Endothelial cell of umbilical vein (primary cell): ENCODE measurements at regions of chr17 and their contacts with region 1.

Region 1: DNA sequence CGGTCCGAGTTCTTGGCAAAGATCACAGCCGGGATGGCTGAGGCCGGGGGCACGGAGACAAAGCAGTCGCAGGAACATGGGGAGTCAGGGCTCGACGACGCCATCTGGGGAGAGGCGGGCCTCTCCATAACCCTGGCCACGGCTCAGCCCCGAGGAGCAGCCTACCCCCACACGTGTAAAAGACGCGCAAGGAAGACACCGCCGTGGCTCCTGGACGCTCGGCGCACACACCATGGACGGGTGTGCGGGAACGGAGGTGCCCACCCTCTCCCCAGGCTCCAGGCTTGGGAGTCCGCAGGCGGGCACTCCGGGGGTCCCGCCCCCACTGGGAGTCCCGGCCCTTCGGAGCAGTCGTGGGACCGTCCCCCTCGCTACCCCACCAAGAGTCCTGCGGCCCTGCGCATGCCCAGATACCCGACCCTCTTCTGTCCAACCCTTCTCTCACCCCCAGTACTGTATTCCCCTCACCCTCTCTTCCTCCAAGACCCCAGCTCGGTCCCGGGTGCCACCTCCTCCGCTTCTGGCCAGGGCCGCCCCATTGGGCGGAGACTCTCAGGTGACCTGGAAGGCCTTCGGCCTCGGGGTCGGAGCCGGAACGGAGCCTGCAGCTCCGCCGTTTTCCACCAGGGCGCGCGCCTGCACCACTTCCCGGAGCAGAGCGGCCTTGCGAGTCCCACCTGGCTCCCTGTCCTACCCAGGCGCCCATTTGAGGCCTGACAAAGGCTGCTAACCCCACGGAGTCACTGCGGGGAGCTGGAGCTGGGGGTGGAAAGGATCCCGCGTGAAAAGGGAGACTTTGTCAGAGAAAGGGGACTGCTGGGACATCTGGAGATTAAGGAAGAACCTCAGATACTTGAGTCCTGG is at the start of gene SCRN2:
- DNase-seq: peak; percentile 91
- H3K4me3 ChIP-seq: peak within 1 kb of the TSS; percentile 65 to 86 (median 65)
- H3K27ac ChIP-seq: no peak within 1 kb of the TSS
- H3K4me1 ChIP-seq: peaks cover 5% of the 10 kb centered on the region
- H3K27me3 ChIP-seq: no peaks in the 10 kb centered on the region
- CTCF ChIP-seq: peak; percentile 97 to 99
- POLR2A ChIP-seq: peak; percentile 32
- total RNA-seq, gene SCRN2: 31.1 and 31.7 TPM in 2 replicates

Region 2: GRCh38 chr17:47725446-47726111 is 115.4 kb before region 1 on chr17:
- CTCF ChIA-PET with region 1: no interaction called
- POLR2A ChIA-PET with region 1: no interaction called
- dilution Hi-C with region 1: no loop called
- intact Hi-C with region 1: no loop called
- DNase-seq: no peak
- H3K4me3 ChIP-seq: no peak overlapping the region
- H3K27ac ChIP-seq: no peak overlapping the region
- H3K4me1 ChIP-seq: no peaks in the 10 kb centered on the region
- H3K27me3 ChIP-seq: peaks cover 18 to 19% of the 10 kb centered on the region in 2 experiments
- CTCF ChIP-seq: no peak
- POLR2A ChIP-seq: no peak

Region 3: DNA sequence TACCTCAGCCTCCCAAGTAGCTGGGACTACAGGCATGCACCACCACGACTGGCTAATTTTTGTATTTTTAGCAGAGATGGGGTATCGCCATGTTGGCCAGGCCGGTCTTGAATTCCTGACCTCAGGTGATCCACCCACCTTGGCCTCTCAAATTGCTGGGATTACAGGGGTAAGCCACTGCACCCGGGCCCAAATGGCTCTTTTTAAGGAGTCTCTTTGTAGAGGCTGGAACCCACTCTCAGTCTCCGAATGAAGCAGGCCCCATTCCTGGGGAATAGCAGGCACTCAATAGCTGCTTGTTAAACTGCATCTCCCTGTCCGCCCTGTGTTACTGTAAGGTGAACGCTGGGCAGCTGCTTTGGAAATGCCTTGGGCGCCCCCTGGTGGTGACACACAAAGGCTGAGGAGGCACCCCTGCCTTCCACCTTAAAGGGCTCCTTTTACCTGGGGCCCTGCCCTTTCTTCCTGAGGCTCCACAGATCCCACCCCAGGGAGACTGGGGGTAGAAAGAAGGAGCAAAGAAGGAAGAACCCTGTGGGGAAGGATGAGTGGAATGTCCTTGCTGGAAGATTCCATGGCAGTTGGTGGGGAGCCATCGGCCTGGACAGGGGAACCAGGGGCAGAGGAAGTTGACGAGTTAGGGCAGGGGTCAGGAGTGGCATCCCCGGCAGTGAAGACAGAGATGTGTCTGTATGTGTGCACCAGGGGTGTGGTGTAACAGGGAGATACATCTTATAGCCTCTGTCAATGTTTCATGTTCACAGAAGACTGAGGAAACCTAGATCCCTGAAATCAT is 49.0 kb after region 1 on chr17:
- CTCF ChIA-PET with region 1: interaction called, 367 read pairs
- POLR2A ChIA-PET with region 1: interaction called, 4 read pairs
- dilution Hi-C with region 1: no loop called
- intact Hi-C with region 1: loop called (anchors 1 kb)
- DNase-seq: peak; percentile 60
- H3K4me3 ChIP-seq: no peak overlapping the region
- H3K27ac ChIP-seq: no peak overlapping the region
- H3K4me1 ChIP-seq: peaks cover 5% of the 10 kb centered on the region
- H3K27me3 ChIP-seq: no peaks in the 10 kb centered on the region
- CTCF ChIP-seq: peak; percentile 85 to 89
- POLR2A ChIP-seq: no peak

Region 4: DNA sequence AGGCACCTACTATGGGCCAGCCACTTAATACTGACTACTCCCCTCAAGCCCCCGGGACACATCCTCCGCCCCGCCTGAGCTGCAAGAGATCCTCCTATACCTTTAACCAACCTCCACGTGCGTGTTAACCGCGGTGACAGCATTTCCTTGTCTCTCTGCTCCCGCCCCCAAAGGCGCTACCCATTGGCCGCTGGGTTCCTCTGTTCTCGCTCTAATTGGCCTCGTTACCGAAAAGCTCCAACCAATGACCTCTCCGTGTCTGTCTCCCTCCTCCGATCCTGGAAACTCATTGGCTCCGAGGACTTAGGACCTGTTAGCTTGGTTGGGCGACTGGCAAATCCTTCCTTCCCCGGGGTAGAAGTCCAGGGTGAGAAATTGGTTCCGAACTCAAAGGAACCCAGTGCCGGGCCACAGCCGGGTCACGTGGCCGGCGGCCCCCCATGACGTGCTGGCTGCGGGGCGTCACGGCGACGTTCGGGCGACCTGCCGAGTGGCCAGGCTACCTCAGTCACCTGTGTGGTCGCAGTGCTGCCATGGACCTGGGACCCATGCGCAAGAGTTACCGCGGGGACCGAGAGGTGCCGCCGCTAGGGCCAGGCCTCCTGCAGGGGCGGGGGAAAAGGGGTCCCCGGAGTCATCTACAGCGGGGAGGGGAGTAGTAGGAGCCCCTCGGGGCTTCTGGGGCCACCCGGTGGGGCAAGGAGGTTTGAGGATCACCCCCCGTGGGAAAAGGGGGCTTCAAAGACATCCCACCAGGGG is 100.4 kb after region 1 on chr17 and contains the start of gene PNPO:
- CTCF ChIA-PET with region 1: interaction called, 12 read pairs
- POLR2A ChIA-PET with region 1: no interaction called
- dilution Hi-C with region 1: no loop called
- intact Hi-C with region 1: loop called (anchors 2 kb)
- DNase-seq: peak; percentile 99
- H3K4me3 ChIP-seq: peak within 1 kb of the TSS; percentile 63 to 85 (median 84)
- H3K27ac ChIP-seq: peak within 1 kb of the TSS; percentile 47
- H3K4me1 ChIP-seq: peaks cover 15% of the 10 kb centered on the region
- H3K27me3 ChIP-seq: no peaks in the 10 kb centered on the region
- CTCF ChIP-seq: no peak
- POLR2A ChIP-seq: no peak
- total RNA-seq, gene PNPO: 20.6 and 22.0 TPM in 2 replicates

Region 5: DNA sequence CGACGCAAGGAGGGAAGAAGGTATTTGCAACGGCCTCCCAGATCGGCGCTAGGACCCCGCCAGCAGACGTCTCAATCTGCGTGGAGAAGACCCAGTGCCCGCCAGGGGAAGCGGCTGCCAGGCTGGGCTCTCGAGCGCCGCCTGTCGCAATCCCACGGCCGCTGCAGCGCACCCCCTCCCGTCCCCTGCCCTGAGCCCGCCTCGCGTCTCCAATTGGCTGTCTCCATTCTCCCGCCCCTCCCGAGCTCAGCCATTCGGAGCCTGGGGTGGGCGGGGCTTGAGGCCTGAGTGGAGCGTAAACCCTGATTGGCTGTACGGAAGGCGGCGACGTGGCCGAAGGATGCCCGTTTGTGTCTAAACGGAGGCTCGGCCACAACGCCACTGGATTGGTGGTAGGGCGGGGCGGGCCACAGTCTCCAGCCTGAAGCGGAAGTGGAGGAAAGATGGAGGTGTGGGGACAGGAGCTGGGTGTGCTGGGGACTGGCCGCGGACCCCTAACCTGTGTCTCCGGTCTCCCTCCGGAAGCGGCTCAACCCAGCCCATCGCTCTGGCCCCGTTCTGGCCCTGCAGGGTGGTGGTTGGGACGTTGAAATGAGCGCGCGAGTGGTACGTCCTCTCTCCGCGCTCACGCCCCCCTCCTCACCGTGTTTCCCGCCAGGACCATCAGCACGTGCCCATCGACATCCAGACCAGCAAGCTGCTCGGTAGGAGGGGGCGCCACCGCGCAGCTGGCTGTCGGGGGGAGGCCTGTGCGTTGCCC is 129.9 kb after region 1 on chr17 and contains the start of gene CDK5RAP3:
- CTCF ChIA-PET with region 1: interaction called, 15 read pairs
- POLR2A ChIA-PET with region 1: no interaction called
- dilution Hi-C with region 1: no loop called
- intact Hi-C with region 1: loop called (anchors 1 kb)
- DNase-seq: peak; percentile 100
- H3K4me3 ChIP-seq: peak within 1 kb of the TSS; percentile 9 to 86 (median 55)
- H3K27ac ChIP-seq: peak within 1 kb of the TSS; percentile 48
- H3K4me1 ChIP-seq: peaks cover 6% of the 10 kb centered on the region
- H3K27me3 ChIP-seq: no peaks in the 10 kb centered on the region
- CTCF ChIP-seq: peak; percentile 97 to 99
- POLR2A ChIP-seq: peak; percentile 81
- total RNA-seq, gene CDK5RAP3: 109 and 122 TPM in 2 replicates